SK-N-SH (cell line): ENCODE measurements at regions of chr18 and their contacts with region 1.

Region 1: DNA sequence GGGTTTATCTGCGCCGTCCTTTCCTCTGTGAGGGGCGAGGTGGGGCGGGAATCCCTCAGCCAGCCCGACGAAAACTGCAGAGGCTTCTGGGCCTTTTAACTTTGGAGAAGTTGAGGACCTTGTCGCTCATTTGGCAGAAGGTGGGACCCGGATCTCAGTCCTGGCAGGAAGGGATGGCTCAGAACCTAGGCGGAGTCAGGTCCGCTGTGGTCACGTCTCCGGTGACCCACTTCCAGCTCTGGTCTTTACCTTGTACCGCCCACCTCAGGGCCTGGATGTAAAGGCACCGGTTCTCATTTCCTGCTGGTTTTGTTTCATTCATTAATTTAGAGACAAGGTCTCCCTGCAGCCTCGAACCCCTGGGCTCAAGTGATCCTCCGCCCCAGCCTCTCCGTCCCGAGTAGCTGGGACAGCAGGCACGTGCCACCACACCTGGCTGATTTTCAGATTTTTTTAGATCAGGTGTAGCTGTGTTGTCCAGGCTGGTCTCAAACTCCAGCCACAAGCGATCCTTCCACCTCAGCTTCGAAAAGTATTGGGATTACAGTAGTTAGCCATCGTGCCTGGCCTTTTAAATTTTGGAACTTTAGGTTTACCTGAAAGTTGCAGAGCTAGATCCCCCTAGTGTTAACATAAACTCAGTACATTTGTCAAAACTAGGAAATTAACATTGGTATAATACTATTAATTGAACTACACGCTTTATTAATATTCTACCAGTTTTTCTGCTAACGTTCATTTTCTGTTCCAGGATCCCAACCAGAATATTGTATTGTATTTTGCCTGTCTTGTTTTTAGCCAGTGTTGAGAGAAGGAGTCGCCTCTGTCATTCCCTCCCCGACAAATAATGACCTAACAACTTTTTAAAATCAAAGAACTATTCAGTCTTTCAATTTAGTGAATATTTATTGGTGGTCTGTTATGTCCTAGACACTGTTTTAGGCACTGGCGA is 852 bp downstream of the POLI start:
- DNase-seq: peak; percentile 65
- H3K4me3 ChIP-seq: peak overlapping the region; percentile 69 to 79
- H3K27ac ChIP-seq: peak overlapping the region; percentile 77 to 91
- H3K4me1 ChIP-seq: peaks cover 4 to 6% of the 10 kb centered on the region in 2 experiments; a peak in 3 of 4 replicates
- H3K27me3 ChIP-seq: no peaks in the 10 kb centered on the region
- CTCF ChIP-seq: peak; percentile 59
- EP300 ChIP-seq: no peak
- RAD21 ChIP-seq: peak; percentile 49

Region 2: GRCh38 chr18:54357660-54358494 is 87.7 kb after region 1 on chr18 and contains the starts of genes C18orf54 and STARD6:
- CTCF ChIA-PET with region 1: interaction called, 12 read pairs
- POLR2A ChIA-PET with region 1: interaction called, 7 read pairs
- DNase-seq: peak; percentile 95
- H3K4me3 ChIP-seq: peak within 1 kb of the TSS; percentile 66 to 84
- H3K27ac ChIP-seq: peak within 1 kb of the TSS; percentile 58 to 93
- H3K4me1 ChIP-seq: no peaks in the 10 kb centered on the region; a peak in 2 of 4 replicates
- H3K27me3 ChIP-seq: no peaks in the 10 kb centered on the region
- CTCF ChIP-seq: peak; percentile 66
- EP300 ChIP-seq: no peak
- RAD21 ChIP-seq: peak; percentile 30; the same call in 1 of the 2 replicates
- polyA plus RNA-seq, gene C18orf54: 0.68 and 0.76 TPM in 2 replicates
- polyA plus RNA-seq, gene STARD6: not detected in 2 replicates

Region 3: DNA sequence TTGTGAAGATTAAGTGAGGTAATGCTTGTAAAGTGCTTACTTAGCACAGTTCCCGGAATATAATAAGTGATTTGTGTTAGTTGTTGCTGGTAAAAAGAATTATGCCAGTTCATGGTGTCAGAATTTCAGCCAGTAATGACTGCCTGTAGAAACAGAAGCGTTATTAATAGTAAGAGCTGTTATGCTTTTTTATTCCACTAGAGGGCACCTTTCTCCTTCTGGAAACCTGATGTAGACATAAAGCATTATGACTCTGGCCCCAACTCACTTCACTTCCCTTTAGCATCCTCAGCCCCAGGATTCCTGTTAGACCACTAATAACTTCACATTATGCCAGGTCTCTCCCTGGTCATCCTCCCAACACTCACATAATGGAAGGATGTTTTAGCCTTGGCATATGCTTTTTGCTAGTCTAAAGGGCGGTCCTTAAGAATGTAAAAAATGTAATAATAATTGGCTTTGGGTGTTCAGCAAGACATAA is 122.4 kb after region 1 on chr18:
- CTCF ChIA-PET with region 1: no interaction called
- POLR2A ChIA-PET with region 1: no interaction called
- DNase-seq: peak; percentile 52
- H3K4me3 ChIP-seq: no peak overlapping the region
- H3K27ac ChIP-seq: no peak overlapping the region
- H3K4me1 ChIP-seq: no peaks in the 10 kb centered on the region; a peak in 1 of 4 replicates
- H3K27me3 ChIP-seq: no peaks in the 10 kb centered on the region
- CTCF ChIP-seq: peak; percentile 81
- EP300 ChIP-seq: no peak
- RAD21 ChIP-seq: peak; percentile 77

Region 4: GRCh38 chr18:54558609-54559585 is 288.7 kb after region 1 on chr18:
- CTCF ChIA-PET with region 1: no interaction called
- POLR2A ChIA-PET with region 1: no interaction called
- DNase-seq: peak; percentile 17
- H3K4me3 ChIP-seq: peak overlapping the region in 1 of 2 experiments; percentile 19; a peak in 1 of 4 replicates
- H3K27ac ChIP-seq: no peak overlapping the region
- H3K4me1 ChIP-seq: no peaks in the 10 kb centered on the region
- H3K27me3 ChIP-seq: no peaks in the 10 kb centered on the region
- CTCF ChIP-seq: peak; percentile 78
- EP300 ChIP-seq: no peak
- RAD21 ChIP-seq: peak; percentile 68

Region 5: GRCh38 chr18:54822872-54823845 is 553.0 kb after region 1 on chr18:
- CTCF ChIA-PET with region 1: no interaction called
- POLR2A ChIA-PET with region 1: no interaction called
- DNase-seq: no peak
- H3K4me3 ChIP-seq: no peak overlapping the region
- H3K27ac ChIP-seq: peak overlapping the region in 1 of 2 experiments; percentile 21; a peak in 1 of 4 replicates
- H3K4me1 ChIP-seq: peaks cover 4 to 15% of the 10 kb centered on the region in 2 experiments; a peak in 3 of 4 replicates
- H3K27me3 ChIP-seq: no peaks in the 10 kb centered on the region
- CTCF ChIP-seq: no peak
- EP300 ChIP-seq: no peak
- RAD21 ChIP-seq: no peak